ENCODE measurements at regions of chr2 and their contacts with region 1.

Region 1: DNA sequence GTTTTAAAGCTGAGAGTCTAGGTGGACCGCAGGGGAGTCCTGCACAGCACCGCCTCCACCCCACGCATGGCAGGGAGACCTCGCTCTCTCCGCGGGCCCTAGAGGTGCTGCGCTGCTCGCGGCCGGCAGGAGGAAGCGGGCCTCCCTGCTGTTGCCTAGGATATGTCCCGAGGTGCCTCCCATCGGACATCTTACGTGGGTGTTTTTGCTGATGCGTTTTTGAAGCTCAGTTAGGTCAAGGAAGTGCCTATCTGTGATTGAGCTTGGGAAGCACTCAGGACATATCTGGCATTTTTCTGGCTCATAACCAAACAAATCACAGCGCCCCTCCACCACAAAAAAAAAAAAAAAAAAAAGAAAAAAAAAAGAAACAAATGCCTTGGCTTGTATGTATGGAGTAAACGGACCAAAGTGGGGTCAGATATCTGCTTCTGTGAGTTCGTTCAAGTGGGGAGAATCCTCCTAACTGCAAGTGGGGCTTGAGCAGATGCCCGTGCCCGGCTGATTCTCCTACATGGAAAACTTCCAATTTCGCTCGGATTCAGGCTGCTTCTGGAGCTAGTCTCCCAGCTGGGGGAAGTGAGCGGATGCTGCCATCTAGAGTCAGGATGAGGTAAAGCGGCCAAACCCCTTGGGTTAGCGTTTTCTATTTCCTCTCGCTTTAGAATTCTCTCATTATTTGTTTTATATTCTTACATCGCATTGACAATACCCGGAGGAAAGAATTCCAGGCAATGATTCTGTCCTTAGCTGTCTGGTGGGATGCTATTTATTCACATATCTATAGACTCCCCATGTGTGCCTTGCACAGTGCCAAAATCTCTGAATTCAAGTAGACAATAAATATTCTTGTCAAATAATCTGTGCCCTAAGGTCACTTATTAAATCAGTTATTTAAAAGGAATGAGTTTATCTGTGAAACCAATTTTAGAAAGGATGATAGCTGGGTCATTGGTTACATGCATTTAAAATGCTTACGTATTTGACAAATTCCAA is 95.3 kb downstream of the CD8B2 start:
- DNase-seq: peak; percentile 66
- ATAC-seq: peak; percentile 99
- H3K4me3 ChIP-seq: peak overlapping the region; percentile 43 to 52
- H3K27ac ChIP-seq: no peak overlapping the region
- H3K4me1 ChIP-seq: peaks cover 3 to 11% of the 10 kb centered on the region in 2 experiments; a peak in 3 of 4 replicates
- H3K27me3 ChIP-seq: 0 out of 2 replicates have a peak, but pooled peaks cover 5% of the 10 kb centered on the region
- CTCF ChIP-seq: peak; percentile 78 to 90 (median 84)
- POLR2A ChIP-seq: no peak
- RAD21 ChIP-seq: peak; percentile 89

Region 2: GRCh38 chr2:105576440-105577252 is 1005.8 kb before region 1 on chr2:
- CTCF ChIA-PET with region 1: interaction called, 3 read pairs
- POLR2A ChIA-PET with region 1: no interaction called
- RAD21 ChIA-PET with region 1: no interaction called
- intact Hi-C with region 1: loop called (anchors 5 kb)
- DNase-seq: peak; percentile 16
- ATAC-seq: peak; percentile 76
- H3K4me3 ChIP-seq: no peak overlapping the region
- H3K27ac ChIP-seq: no peak overlapping the region
- H3K4me1 ChIP-seq: no peaks in the 10 kb centered on the region
- H3K27me3 ChIP-seq: peaks cover 14% of the 10 kb centered on the region; the same call in 1 of the 2 replicates
- CTCF ChIP-seq: peak; percentile 46 to 61 (median 59); a peak in 5 of 6 replicates
- POLR2A ChIP-seq: no peak
- RAD21 ChIP-seq: peak; percentile 77

Region 3: DNA sequence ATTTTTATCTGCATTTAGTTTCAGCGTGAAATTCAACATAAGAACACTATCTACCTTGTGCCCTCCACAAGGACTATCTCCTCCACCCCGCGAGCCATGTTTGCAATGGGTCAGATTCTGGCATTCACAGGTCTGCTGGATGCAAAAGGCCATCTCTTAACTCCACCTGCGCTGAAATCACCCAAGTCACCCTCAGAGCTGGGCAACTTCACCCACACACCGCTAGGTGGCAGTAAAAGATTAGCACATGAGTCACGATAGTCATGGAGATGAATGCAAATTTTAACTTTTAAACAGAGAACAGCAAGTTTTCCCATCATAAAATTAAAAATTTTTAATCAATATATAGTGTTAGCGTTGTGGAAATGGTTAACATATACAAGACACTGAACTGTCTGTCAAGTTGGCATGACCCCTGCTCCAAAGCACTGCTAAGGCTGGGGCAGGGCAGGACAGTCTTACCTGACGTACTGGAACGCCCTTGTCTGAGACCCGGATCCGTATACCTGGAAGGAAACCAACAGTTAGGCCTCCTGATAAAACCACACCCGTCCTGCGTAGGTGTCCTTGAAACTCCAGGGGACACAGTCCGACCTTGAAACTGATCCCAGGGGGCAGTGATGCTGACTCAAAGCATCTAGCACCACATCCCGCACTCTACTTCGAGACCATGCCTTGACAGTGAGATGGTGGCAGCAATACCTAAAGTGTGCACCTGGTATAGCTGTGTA is 477.9 kb before region 1 on chr2:
- CTCF ChIA-PET with region 1: interaction called, 7 read pairs
- POLR2A ChIA-PET with region 1: no interaction called
- RAD21 ChIA-PET with region 1: no interaction called
- intact Hi-C with region 1: loop called (anchors 1 kb)
- DNase-seq: peak; percentile 44
- ATAC-seq: peak; percentile 93
- H3K4me3 ChIP-seq: no peak overlapping the region
- H3K27ac ChIP-seq: no peak overlapping the region
- H3K4me1 ChIP-seq: peaks cover 0 to 7% of the 10 kb centered on the region in 2 experiments; a peak in 1 of 4 replicates
- H3K27me3 ChIP-seq: no peaks in the 10 kb centered on the region
- CTCF ChIP-seq: peak; percentile 85 to 91 (median 91)
- POLR2A ChIP-seq: no peak
- RAD21 ChIP-seq: peak; percentile 95

Region 4: DNA sequence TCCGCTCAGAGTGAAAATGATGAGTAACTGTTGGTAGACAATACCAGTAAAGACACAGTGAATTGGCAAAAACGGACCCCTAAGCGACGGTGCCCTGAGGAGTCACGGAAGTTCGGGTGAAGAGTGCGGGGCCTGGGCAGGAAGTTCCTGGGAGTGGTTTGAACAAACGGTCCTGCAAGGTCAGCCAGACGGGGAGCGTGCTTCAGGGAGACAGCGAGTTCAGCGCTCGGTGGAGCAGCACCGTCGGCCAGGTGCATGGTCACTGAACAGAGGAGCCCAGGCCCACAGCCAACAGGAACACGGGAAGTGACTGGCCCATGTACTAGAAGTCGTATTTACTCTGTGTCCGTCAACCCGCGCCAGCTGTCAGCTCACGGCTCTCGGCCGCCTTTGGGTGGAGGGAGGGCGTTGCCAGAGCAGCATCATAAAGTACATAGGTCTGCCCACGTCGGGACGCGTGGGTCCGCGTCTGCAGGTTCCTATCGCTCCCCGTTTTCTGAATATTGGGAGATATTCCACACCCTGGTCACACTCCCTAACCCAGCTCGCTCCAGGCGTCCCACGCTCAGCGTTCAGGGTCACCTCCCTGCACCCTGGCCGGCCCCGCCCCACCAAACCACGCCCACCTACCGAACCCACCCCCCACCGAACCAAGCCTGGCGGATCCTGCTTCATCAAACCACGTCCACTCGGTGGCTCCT is 312.7 kb before region 1 on chr2:
- CTCF ChIA-PET with region 1: no interaction called
- POLR2A ChIA-PET with region 1: no interaction called
- RAD21 ChIA-PET with region 1: no interaction called
- intact Hi-C with region 1: loop called (anchors 10 kb)
- DNase-seq: no peak
- ATAC-seq: peak; percentile 81
- H3K4me3 ChIP-seq: peak overlapping the region; percentile 21 to 47; a peak in 3 of 4 replicates
- H3K27ac ChIP-seq: no peak overlapping the region
- H3K4me1 ChIP-seq: peaks cover 0 to 10% of the 10 kb centered on the region in 2 experiments; a peak in 1 of 4 replicates
- H3K27me3 ChIP-seq: no peaks in the 10 kb centered on the region
- CTCF ChIP-seq: no peak
- POLR2A ChIP-seq: no peak
- RAD21 ChIP-seq: no peak

Region 5: DNA sequence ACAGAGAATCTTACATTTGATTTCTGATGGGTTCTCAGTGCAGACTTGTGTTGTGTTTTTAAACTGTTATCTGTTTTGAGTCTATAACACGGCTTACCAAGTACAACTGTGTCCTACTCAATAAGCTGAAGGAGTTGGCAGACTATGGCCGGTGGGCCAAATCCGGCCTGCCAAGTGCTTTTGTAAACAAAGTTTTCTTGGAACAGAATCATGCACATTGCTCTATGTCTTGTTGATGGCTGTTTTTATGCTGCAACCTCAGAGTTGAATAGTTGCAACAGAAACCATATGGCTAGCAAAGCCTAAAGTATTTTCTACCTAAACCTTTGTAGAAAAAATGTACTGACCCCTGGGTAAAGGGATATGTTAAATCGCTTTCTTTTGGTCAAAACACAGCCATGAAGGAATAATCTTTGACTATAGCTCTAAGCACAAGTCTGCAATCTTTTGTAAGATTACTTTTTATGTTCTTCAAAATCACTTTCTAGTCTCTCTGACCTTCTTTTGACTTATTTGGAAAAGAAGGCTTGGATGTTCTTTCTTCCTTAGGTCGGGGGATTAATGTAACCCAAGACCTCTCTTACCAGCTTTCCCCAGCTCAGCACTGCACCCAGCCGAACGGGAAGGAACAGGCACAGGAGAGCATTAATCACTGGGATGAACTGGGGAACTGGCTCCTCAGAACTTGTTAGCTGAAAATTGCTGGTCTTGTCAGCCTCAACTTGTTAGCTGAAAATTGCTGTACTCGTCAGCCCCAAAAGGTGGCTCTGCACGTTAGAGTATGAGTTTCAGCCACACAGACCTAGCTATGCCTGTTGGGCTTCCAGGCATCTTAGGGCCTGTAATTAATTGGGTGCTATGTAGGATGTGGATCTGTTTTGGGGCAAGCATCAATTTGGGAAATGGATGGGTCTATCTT is 19.9 kb before region 1 on chr2:
- CTCF ChIA-PET with region 1: interaction called, 45 read pairs
- POLR2A ChIA-PET with region 1: interaction called, 3 read pairs
- RAD21 ChIA-PET with region 1: interaction called, 4 to 7 read pairs
- intact Hi-C with region 1: no loop called
- DNase-seq: no peak
- ATAC-seq: peak; percentile 69
- H3K4me3 ChIP-seq: no peak overlapping the region
- H3K27ac ChIP-seq: no peak overlapping the region
- H3K4me1 ChIP-seq: no peaks in the 10 kb centered on the region
- H3K27me3 ChIP-seq: peaks cover 9% of the 10 kb centered on the region; the same call in 1 of the 2 replicates
- CTCF ChIP-seq: no peak
- POLR2A ChIP-seq: no peak
- RAD21 ChIP-seq: no peak

Measured in HCT116 (cell line).